Transverse colon (tissue), 4 donors: ENCODE measurements at regions of chr5 and their contacts with region 1.

Region 1: DNA sequence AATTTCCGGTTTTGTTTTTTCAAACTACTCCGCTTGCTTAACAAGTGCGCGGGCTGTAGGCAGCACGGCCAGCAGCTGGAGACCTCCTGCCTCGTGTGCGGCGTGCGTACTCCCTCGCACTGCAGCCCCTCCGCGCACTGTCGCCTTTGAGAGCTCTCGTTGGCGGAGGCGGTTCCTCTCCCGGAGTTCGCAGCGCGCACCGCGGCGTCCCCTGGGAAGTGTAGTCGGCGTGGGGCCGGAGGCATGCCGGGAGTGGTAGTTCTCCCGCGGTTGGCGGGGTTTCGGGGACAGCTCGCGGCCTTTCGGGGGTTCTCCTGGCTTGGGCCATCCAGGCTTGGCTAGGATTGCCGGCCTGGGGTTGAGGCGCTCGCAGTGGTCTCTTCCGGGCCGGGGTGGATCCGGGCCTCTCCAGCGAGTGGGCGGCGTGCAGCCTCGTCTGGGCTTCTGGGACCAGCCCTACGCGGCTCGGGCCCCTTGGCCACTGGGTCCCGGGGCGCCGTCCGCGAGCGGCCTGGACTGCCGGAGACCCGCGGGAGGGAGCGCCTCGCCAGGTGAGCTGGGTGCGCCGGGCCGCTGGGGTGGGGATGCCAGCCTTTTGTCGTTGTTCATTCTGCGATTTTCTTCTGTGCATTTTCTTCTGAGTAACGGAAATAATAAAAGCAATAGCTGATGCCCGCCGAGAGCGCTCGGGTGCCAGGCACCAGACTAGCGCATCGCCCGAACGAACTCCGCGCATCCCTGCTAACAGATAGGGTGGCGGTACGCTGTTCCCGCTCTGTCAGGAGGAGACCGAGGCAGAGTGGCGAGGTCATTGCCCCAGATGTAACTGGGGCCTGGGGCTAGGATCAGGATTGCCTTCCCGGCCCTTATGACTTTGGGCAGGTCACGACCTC is at the start of gene ZNF354C:
- DNase-seq: peak; percentile 86
- H3K4me3 ChIP-seq: peak within 1 kb of the TSS; percentile 38 to 84 (median 70)
- H3K27ac ChIP-seq: peak within 1 kb of the TSS; percentile 51 to 76 (median 72)
- H3K4me1 ChIP-seq: peaks cover 0 to 9% (median 6%) of the 10 kb centered on the region in 4 donors
- H3K27me3 ChIP-seq: no peaks in the 10 kb centered on the region
- CTCF ChIP-seq: no peak
- EP300 ChIP-seq: no peak
- POLR2A ChIP-seq: peak; percentile 24
- total RNA-seq, gene ZNF354C: 0.75 to 7.6 (median 2.9) TPM

Region 2: GRCh38 chr5:178699681-178700253 is 360.6 kb before region 1 on chr5:
- in situ Hi-C with region 1: loop called in 2 of 4 experiments (anchors 25 kb)
- intact Hi-C with region 1: no loop called
- DNase-seq: no peak
- H3K4me3 ChIP-seq: no peak overlapping the region
- H3K27ac ChIP-seq: no peak overlapping the region
- H3K4me1 ChIP-seq: no peaks in the 10 kb centered on the region
- H3K27me3 ChIP-seq: no peaks in the 10 kb centered on the region
- CTCF ChIP-seq: no peak
- EP300 ChIP-seq: no peak
- POLR2A ChIP-seq: no peak

Region 3: GRCh38 chr5:178732281-178732680 is 328.1 kb before region 1 on chr5:
- in situ Hi-C with region 1: no loop called
- intact Hi-C with region 1: loop called (anchors 10 kb)
- DNase-seq: no peak
- H3K4me3 ChIP-seq: no peak overlapping the region
- H3K27ac ChIP-seq: no peak overlapping the region
- H3K4me1 ChIP-seq: peaks cover 0 to 8% (median 6%) of the 10 kb centered on the region in 4 donors
- H3K27me3 ChIP-seq: no peaks in the 10 kb centered on the region
- CTCF ChIP-seq: no peak
- EP300 ChIP-seq: no peak
- POLR2A ChIP-seq: no peak

Region 4: DNA sequence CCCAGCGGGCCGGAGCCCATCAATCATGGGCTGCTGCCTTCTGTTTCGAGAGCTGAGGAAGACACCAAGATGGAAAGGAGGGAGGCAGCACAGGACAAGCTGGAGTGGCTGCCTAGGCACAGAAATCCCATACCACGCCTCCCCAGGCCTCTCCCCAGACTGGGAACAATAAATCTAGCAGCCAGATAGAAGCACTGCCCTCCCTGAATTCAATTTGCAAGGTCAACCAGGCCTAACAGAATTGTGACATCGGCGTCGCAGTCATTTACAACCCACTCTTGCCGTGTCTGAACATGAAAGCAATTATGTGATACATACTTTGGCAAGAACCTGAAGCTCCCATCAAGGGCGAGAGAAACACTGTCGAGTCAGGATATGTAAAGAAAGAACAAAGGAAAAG is 294.5 kb before region 1 on chr5:
- in situ Hi-C with region 1: no loop called
- intact Hi-C with region 1: no loop called
- DNase-seq: no peak
- H3K4me3 ChIP-seq: no peak overlapping the region
- H3K27ac ChIP-seq: no peak overlapping the region
- H3K4me1 ChIP-seq: no peaks in the 10 kb centered on the region
- H3K27me3 ChIP-seq: no peaks in the 10 kb centered on the region
- CTCF ChIP-seq: no peak
- EP300 ChIP-seq: no peak
- POLR2A ChIP-seq: no peak

Region 5: DNA sequence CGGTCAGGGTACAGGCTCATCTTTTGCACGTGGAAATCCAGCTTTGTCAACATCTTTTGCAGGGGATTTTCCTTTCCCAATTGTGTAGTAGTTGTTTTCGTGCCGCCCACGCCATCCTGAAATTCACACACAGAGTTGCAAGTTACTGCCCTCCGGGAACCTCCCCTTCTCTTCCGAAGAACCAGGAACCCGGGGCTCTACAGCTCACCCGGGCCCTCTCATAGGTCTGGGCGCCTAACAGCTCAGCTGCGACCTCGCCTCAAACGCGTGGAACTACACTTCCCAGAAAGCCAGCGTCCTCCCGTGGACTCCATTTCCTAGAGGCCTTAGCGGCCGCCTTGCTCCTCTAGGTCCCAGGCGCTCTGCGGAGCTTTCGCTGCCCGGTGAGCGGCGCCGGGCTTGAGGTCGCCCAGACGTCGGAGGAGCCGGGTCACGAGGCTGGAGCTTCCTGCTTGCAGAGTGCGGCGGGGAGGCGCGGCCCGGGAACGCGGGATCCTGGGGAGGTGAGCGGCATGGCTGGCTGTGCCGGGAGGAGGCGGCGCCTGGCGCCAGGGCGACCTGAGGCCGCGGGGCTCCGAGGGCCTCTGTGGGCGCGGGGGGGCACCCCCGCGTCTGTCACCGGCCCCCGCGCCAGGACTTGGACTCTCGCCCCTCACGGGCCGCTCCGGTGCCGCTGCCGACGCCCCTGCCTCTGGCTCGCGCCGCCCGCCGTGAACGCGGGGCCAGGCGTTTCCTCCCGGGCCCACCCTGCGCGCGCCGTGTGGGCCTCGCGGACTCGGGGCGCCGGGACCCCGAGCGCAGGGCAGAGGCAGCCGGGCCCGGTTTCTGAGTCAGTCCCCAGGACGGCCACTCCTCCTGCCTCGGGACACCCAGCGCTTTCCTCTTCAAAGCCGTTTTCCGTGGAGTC is 200.5 kb before region 1 on chr5 and contains the start of gene ZNF354B:
- in situ Hi-C with region 1: loop called in 1 of 4 experiments (anchors 25 kb)
- intact Hi-C with region 1: no loop called
- DNase-seq: peak; percentile 92
- H3K4me3 ChIP-seq: peak within 1 kb of the TSS; percentile 78 to 97 (median 90)
- H3K27ac ChIP-seq: peak within 1 kb of the TSS; percentile 83 to 94 (median 89)
- H3K4me1 ChIP-seq: peaks cover 4 to 13% (median 6%) of the 10 kb centered on the region in 4 donors
- H3K27me3 ChIP-seq: no peaks in the 10 kb centered on the region
- CTCF ChIP-seq: peak in 1 of 5 experiments; percentile 15
- EP300 ChIP-seq: no peak
- POLR2A ChIP-seq: peak; percentile 61
- total RNA-seq, gene ZNF354B: 2.4 to 42.3 (median 14.8) TPM

Region 6: DNA sequence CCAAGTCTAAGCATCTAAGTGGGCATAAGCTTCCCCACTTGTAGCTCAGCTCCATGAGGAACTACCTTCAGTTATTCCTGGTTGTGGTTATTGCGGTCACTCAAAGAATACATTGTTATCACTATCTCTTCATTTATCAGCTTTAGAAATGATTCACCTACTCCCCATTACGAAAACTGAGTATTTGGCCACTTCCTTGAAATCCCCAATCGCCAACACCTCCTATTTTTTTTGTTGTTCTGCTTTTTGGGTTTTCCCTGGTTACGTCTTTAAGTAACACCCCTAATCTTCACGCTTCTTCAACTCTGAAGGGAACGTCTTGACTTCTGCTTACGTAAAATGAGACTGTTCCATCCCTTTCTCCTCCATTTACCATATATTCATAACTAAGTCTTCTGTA is 1210.9 kb after region 1 on chr5:
- in situ Hi-C with region 1: no loop called
- intact Hi-C with region 1: loop called (anchors 5 kb)
- DNase-seq: no peak
- H3K4me3 ChIP-seq: no peak overlapping the region
- H3K27ac ChIP-seq: no peak overlapping the region
- H3K4me1 ChIP-seq: no peaks in the 10 kb centered on the region
- H3K27me3 ChIP-seq: no peaks in the 10 kb centered on the region
- CTCF ChIP-seq: no peak
- EP300 ChIP-seq: no peak
- POLR2A ChIP-seq: no peak